Activated CD4-positive, alpha-beta T cell treated with anti-CD3 and anti-CD28 coated beads, Interleukin-2, amount 10 ng/mL, durations not matched to agents 24 days and 14 days (primary cell): ENCODE measurements at regions of chr12 and their contacts with region 1.

Region 1: DNA sequence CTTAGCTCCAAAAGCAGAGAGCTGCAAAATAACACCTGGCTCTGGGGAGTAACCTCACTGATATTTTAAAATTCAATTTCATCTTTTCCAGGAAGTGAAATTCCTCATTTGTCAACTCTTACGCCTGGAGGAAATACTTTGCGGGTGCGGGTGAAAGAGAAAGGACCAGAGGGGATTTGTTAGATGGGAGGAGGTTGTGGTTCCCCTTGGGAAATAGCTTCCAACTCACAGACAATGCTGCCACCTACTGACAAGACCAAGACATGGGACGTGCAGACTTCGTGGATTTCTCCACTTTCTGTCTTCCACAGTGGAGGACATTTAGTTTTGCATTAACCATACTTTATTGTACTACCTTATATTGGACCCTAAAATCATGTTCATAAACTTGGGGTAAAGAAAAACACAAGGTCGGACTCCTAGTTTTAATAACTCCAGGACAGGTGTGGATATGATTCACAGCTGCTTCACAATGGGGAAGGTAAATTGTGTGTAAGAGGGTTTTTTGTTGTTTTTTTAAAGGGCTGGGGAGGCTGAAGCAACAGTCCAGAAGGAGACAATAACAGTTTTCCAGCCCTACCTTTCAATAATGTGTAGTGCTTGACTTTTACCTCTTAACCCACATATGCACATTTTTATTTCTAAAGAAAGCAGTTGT is 10.8 kb downstream of the FBXL14 start:
- DNase-seq: peak; percentile 91
- H3K4me3 Mint-ChIP-seq: no peak overlapping the region
- H3K27ac Mint-ChIP-seq: no peak overlapping the region
- H3K4me1 Mint-ChIP-seq: peaks cover 14% of the 10 kb centered on the region
- H3K27me3 Mint-ChIP-seq: no peaks in the 10 kb centered on the region

Region 2: GRCh38 chr12:1204581-1205121 is 378.9 kb before region 1 on chr12:
- intact Hi-C with region 1: loop called (anchors 10 kb)
- DNase-seq: peak; percentile 69
- H3K4me3 Mint-ChIP-seq: no peak overlapping the region
- H3K27ac Mint-ChIP-seq: no peak overlapping the region
- H3K4me1 Mint-ChIP-seq: peaks cover 9% of the 10 kb centered on the region
- H3K27me3 Mint-ChIP-seq: no peaks in the 10 kb centered on the region

Region 3: DNA sequence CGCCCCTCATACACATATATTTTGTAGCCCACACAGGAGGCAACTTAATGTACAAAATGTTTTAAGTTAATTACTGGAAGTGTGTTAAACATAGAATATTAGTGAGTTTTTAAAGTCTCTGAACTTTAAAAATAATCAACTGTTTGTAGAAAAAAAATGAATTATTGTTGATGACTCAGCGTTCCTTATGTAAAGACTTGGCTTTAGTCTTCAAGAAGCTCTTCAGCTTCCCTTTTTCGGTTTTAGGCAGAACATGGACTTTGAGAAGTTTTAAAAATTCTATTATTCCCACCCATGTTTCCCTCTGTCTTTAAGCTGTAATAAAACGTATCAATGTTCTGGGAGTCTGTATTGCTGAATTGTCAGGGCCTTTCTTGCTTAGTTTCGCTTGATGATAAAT is 258.6 kb before region 1 on chr12:
- intact Hi-C with region 1: loop called (anchors 2 kb)
- DNase-seq: no peak
- H3K4me3 Mint-ChIP-seq: no peak overlapping the region
- H3K27ac Mint-ChIP-seq: no peak overlapping the region
- H3K4me1 Mint-ChIP-seq: peaks cover 9% of the 10 kb centered on the region
- H3K27me3 Mint-ChIP-seq: no peaks in the 10 kb centered on the region

Region 4: DNA sequence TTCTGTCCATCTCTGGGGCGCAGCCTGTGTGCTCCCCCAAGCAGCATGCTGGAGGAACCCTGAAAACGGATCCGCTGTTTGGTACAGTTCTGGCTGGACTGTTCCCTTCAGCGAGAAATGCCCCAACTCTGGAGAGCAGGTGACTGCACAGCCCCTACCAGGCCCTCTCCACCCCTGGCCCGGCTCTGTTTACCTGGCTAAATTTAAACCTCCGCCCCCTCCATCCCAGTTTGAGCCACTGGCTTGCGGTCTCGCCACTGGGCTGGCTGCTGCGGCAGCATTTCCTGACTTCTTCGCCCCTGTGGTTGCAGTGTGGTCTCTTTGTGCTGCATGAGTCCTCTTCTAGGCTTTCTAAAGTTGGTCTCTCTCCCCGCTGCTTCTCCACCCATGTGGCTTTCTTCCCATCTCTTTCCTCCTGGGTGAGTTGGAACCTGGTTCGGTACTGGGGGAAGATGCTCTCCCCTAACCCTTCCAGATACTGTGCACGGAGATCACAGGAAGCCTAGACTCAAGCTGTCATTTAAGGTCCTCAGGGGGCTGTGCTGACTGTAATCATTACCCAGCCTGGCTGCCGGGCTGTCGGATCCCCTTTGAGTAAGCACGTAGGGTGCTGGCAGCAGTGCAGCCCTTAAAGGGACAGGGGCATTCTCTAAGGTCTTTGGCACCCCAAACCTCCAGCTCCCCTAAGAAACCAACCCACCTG is 49.8 kb before region 1 on chr12:
- intact Hi-C with region 1: loop called (anchors 5 kb)
- DNase-seq: peak; percentile 87
- H3K4me3 Mint-ChIP-seq: peak overlapping the region; percentile 80
- H3K27ac Mint-ChIP-seq: peak overlapping the region; percentile 32
- H3K4me1 Mint-ChIP-seq: peaks cover 25% of the 10 kb centered on the region
- H3K27me3 Mint-ChIP-seq: peaks cover 64% of the 10 kb centered on the region